ENCODE measurements at regions of chr2 and their contacts with region 1.

Region 1: DNA sequence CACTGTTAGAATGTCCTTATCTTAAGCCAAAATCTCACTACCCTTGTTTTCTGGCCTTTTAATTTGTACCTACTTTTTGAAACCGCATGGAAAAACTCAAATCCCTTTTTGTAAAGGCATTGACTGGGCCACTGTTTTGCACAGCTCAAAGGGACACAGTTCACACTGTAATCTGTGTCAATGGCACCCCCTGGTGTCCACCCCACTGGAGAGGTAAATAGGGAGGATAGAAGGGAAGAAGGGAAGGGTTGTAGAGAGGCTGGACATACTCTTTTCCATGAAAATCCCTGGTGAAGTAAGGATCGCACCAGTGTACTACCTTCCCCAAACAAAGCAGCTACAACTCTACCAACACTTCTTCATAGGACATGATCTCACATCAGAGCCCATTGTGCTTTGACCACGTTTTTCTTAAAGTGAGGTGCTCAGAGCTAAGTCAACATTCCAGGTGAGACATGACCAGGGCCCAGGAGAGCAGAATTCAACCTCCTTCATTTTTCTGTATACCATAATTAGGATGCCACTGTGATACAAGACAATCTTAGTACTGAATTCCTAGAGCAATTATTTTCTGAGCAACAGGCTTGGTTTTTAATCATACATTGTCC is 92.4 kb upstream of the RMDN2 start:
- DNase-seq: peak; percentile 94
- H3K4me3 Mint-ChIP-seq: no peak overlapping the region
- H3K27ac Mint-ChIP-seq: no peak overlapping the region
- H3K4me1 Mint-ChIP-seq: peaks cover 20% of the 10 kb centered on the region
- H3K27me3 Mint-ChIP-seq: no peaks in the 10 kb centered on the region

Region 2: DNA sequence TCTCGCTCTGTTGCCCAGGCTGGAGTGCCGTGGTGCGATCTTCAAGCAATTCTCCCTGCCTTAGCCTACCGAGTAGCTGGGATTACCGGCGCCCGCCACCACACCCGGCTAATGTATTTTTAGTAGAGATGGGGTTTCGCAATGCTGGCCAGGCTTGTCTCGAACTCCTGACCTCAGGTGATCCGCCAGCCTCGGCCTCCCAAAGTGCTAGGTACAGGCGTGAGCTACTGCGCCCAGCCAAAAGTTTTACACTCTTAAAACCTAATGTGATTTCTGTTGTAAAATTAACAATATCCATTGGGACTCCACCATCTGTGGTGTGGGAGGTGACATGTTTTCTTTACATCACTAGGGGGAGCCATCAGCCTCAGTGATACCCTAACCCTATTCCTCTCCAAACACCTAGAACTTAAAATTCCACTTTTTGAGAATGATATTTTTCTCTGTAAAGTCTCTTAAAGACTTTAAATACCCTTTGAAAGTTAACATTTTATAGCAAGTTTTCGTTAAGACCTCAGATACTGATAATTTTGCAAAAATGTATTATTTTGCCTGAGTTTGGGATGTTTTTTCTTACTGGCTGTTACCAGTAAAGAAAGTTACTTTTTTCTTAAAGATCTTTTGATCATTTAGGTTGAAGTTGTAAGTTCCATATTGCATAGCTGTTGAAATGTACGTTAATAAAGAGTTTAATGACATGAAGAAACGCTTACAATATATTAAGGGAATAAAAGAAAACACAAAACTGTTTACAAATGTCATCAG is 664.3 kb before region 1 on chr2:
- intact Hi-C with region 1: loop called (anchors 2 kb)
- DNase-seq: peak; percentile 75
- H3K4me3 Mint-ChIP-seq: no peak overlapping the region
- H3K27ac Mint-ChIP-seq: no peak overlapping the region
- H3K4me1 Mint-ChIP-seq: no peaks in the 10 kb centered on the region
- H3K27me3 Mint-ChIP-seq: peaks cover 3% of the 10 kb centered on the region

Region 3: DNA sequence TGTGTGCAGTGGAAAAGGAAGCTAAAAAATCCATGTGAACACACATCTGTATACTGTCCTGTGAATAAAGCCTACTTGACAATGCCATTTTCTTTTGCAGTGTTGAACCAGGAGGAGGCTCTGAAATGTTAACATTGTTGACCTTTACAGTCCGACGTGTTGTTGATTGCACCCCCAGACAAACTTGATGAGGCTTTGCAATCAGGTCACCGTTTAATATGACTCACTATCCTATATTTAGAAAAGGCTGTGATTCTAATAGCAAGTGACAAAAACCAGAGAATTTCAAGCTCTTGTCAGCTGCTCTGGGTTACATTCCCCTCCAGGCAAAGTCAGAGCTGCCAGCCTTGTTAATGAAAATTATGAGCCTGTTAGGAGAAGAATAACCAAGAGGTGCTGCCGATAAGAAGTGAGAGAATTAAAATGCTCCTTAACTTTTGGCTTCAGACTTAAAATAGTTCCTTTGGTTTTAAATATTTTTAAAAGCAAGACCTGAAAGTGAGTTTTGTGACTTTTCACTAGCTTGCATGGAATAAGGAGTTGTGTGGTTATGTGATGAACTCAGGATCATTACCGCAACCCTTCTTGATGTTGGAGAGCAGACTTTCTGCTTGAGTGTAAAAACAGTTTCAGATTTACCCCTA is 326.2 kb before region 1 on chr2:
- intact Hi-C with region 1: no loop called
- DNase-seq: no peak
- H3K4me3 Mint-ChIP-seq: no peak overlapping the region
- H3K27ac Mint-ChIP-seq: no peak overlapping the region
- H3K4me1 Mint-ChIP-seq: no peaks in the 10 kb centered on the region
- H3K27me3 Mint-ChIP-seq: peaks cover 21% of the 10 kb centered on the region

Region 4: GRCh38 chr2:37549598-37549997 is 283.1 kb before region 1 on chr2:
- intact Hi-C with region 1: loop called (anchors 2 kb)
- DNase-seq: peak; percentile 40
- H3K4me3 Mint-ChIP-seq: no peak overlapping the region
- H3K27ac Mint-ChIP-seq: no peak overlapping the region
- H3K4me1 Mint-ChIP-seq: peaks cover 6% of the 10 kb centered on the region
- H3K27me3 Mint-ChIP-seq: peaks cover 8% of the 10 kb centered on the region

Region 5: DNA sequence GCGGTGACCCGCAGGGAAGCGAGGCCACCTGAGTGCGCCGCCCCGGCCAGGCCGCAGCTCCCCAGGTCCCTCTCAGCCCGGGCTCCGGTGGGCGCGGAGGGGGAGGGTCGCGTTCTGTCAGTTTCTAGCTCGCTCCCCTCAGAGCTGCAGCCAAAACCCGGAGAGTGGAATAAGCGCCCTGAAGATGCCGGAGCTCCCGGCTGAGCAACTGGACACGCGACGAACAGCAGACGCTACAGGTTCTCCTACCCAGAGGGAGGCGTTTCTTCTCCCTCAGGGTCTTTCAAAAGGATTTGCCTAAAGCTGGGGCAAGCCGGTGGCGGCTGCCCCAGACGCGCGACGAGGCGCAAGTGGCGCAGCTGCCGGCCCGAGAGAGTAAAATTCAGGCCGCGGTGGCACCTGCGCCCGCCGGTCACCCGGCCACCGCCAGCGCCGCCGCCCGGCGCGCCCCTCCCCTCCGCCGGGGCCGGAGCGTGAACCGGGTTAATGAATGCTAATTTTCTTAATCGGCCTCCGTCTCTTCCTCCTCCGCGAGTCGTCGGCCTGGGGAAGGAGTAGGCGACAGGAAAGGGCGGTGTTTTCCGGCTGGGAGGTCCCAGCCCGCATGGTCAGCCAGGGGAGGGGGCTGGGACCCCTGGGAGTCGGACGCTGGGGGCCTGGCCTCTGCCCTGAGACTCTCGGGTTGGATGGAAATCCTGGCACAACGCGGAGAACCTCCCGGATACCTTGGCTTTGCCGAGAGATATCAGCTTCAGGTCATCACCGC is 160.4 kb before region 1 on chr2:
- intact Hi-C with region 1: loop called (anchors 2 kb)
- DNase-seq: peak; percentile 92
- H3K4me3 Mint-ChIP-seq: peak overlapping the region; percentile 88
- H3K27ac Mint-ChIP-seq: peak overlapping the region; percentile 76
- H3K4me1 Mint-ChIP-seq: peaks cover 37% of the 10 kb centered on the region
- H3K27me3 Mint-ChIP-seq: peaks cover 5% of the 10 kb centered on the region

Region 6: GRCh38 chr2:37877457-37878315 is 45.0 kb after region 1 on chr2:
- intact Hi-C with region 1: loop called (anchors 1 kb)
- DNase-seq: peak; percentile 83
- H3K4me3 Mint-ChIP-seq: no peak overlapping the region
- H3K27ac Mint-ChIP-seq: no peak overlapping the region
- H3K4me1 Mint-ChIP-seq: peaks cover 26% of the 10 kb centered on the region
- H3K27me3 Mint-ChIP-seq: peaks cover 25% of the 10 kb centered on the region

Measured in activated CD4-positive, alpha-beta T cell treated with anti-CD3 and anti-CD28 coated beads, Interleukin-2, amount 10 ng/mL, durations not matched to agents 24 days and 14 days (primary cell).